Posterior cingulate gyrus (tissue), 11 donors: ENCODE measurements at regions of chr1 and their contacts with region 1.

Region 1: GRCh38 chr1:147882535-147882934 is 20.1 kb upstream of the GJA8 start:
- DNase-seq: no peak

Region 2: GRCh38 chr1:147723691-147724323 is 158.7 kb before region 1 on chr1:
- intact Hi-C with region 1: loop called (anchors 10 kb)
- DNase-seq: peak in 2 of 10 donors; percentile 3 to 20

Region 3: DNA sequence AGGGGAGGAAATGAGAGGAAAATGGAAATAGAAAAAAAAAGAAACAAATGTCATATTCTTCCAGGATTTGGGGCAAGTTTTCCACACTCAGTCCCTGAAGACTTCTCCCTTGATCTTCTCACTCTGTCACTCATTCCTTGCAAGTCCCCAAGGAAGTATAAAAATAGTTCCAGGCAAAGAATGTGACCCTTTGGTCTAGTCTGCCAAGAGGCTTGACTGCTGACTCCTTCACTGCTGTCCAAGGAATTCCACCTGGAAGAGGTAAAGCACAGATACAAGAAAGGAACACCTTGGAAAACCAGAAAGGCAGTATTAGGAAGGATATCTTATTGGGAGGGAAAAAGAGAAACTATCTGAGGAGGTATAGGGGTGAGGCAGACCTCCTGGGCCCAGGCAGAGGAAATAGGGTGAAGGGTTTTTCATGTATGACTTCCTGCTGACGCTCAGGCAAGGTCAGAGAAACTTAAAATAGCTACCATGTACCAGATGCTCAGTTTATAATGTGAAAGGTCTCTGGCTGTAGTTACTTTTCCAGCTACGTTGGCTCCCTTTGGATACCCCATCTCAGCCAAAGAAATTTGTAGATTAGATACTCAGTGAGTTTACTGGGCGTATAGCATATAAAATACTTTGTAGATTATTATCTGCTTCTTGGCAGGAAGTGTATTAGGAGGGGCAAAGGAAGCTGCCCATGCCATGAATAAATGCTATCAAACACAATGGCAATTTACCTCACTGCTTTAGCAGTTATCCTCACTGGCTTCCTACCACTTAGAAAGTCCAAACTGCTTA is 120.1 kb before region 1 on chr1:
- intact Hi-C with region 1: no loop called
- DNase-seq: no peak

Region 4: GRCh38 chr1:148160048-148160342 is 277.5 kb after region 1 on chr1:
- intact Hi-C with region 1: no loop called
- DNase-seq: peak in 2 of 10 donors; percentile 31 to 45